CD4-positive, alpha-beta memory T cell (primary cell): ENCODE measurements at regions of chr9 and their contacts with region 1.

Region 1: GRCh38 chr9:69421908-69422801 is 97.1 kb downstream of the ENTREP1 start:
- DNase-seq: peak in 4 of 5 donors; percentile 41 to 46 (median 44)
- H3K4me3 ChIP-seq: no peak overlapping the region
- H3K4me3 Mint-ChIP-seq: no peak overlapping the region
- H3K27ac ChIP-seq: no peak overlapping the region
- H3K27ac Mint-ChIP-seq: no peak overlapping the region
- H3K4me1 ChIP-seq: no peaks in the 10 kb centered on the region
- H3K4me1 Mint-ChIP-seq: peaks cover 0 to 4% (median under 1%) of the 10 kb centered on the region in 4 donors
- H3K27me3 ChIP-seq: no peaks in the 10 kb centered on the region
- H3K27me3 Mint-ChIP-seq: peaks cover 4 to 18% of the 10 kb centered on the region in 2 donors

Region 2: DNA sequence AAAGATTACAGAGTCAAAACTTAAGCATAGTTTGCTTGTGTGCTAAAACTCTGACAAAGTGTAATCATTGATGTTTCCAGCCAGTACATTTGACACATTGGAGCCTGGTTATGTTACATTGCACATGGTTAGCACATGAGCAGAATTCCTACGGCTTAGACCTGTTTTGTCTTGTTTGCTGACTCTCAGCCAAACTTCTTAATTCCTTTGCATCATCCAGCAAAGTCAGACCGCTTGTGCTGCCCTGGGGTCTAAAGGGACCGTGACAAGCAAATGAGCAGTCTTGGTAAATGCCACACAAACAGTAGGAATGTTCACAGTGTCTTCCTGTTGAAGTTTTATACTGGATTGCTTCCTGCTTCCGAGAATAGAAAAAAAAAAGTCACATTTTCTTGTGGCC is 169.1 kb before region 1 on chr9:
- CTCF ChIA-PET with region 1: no interaction called
- POLR2A ChIA-PET with region 1: no interaction called
- intact Hi-C with region 1: no loop called
- DNase-seq: no peak
- H3K4me3 ChIP-seq: no peak overlapping the region
- H3K4me3 Mint-ChIP-seq: no peak overlapping the region
- H3K27ac ChIP-seq: no peak overlapping the region
- H3K27ac Mint-ChIP-seq: no peak overlapping the region
- H3K4me1 ChIP-seq: no peaks in the 10 kb centered on the region
- H3K4me1 Mint-ChIP-seq: no peaks in the 10 kb centered on the region
- H3K27me3 ChIP-seq: no peaks in the 10 kb centered on the region
- H3K27me3 Mint-ChIP-seq: no peaks in the 10 kb centered on the region

Region 3: DNA sequence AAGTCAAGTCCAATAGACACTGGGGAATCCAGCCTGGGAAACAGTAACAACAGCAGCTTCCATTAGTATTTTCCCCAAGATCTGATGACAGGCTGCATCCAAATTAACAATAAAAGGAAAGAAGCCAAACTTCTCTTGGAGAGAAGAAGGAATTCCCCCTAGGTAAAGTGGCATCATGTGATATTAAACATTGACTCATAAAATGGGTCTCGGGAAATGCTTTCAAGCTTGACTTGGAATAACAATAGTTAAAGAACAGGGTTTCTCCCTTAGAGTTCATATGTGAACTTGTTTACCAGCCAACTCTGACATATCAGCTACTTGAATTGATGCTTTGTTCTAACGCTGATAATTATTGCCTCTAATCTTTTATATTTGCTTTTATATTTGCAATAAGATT is 51.7 kb before region 1 on chr9:
- CTCF ChIA-PET with region 1: no interaction called
- POLR2A ChIA-PET with region 1: no interaction called
- intact Hi-C with region 1: no loop called
- DNase-seq: no peak
- H3K4me3 ChIP-seq: no peak overlapping the region
- H3K4me3 Mint-ChIP-seq: no peak overlapping the region
- H3K27ac ChIP-seq: no peak overlapping the region
- H3K27ac Mint-ChIP-seq: no peak overlapping the region
- H3K4me1 ChIP-seq: no peaks in the 10 kb centered on the region
- H3K4me1 Mint-ChIP-seq: no peaks in the 10 kb centered on the region
- H3K27me3 ChIP-seq: no peaks in the 10 kb centered on the region
- H3K27me3 Mint-ChIP-seq: peaks cover 9 to 10% of the 10 kb centered on the region in 2 donors

Region 4: GRCh38 chr9:69444021-69444420 is 21.9 kb after region 1 on chr9:
- CTCF ChIA-PET with region 1: interaction called, 10 read pairs
- POLR2A ChIA-PET with region 1: no interaction called
- intact Hi-C with region 1: no loop called
- DNase-seq: no peak
- H3K4me3 ChIP-seq: no peak overlapping the region
- H3K4me3 Mint-ChIP-seq: no peak overlapping the region
- H3K27ac ChIP-seq: no peak overlapping the region
- H3K27ac Mint-ChIP-seq: no peak overlapping the region
- H3K4me1 ChIP-seq: no peaks in the 10 kb centered on the region
- H3K4me1 Mint-ChIP-seq: peaks cover 0 to 18% (median 2%) of the 10 kb centered on the region in 4 donors
- H3K27me3 ChIP-seq: no peaks in the 10 kb centered on the region
- H3K27me3 Mint-ChIP-seq: peaks cover 1 to 10% of the 10 kb centered on the region in 2 donors

Region 5: DNA sequence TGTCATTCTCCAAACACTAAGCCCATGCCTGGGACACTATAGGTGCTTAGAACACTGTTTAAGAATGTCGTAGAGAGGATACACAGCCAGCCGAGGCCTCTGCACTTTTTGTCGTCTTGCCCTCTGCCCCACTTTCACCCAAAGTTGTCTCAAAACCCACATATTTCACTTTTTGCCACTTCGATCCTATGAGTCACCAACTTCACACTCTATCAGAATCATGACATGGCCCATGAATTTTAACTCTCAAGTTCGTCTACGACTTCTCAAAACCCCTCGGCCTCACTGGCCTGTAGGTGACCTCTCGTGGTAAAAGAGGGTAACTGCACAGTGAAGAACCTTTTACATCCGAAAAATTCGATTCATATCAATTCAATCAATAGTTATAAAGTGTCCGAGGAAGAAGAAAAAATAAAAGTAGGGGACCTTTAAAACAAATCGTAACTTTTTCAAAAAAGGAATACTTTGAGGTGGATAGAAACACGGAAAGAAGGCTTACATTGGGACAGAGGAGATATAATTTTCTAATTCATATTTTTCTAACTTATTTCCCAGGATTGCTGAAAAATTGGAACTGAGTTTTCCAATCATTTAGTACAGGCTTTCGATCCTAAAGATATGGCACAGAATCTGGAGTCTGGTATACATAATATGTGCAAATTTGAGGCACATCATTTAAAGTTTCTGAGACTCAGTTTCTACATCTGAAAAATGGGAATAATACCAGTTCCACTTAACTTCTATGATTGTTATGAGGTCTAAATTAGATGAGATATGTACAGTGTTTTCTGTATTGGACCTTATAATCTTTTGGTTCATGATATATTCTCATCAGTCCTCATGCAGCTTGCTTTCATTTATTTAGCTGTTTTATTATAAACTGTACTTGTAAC is 127.4 kb after region 1 on chr9:
- CTCF ChIA-PET with region 1: interaction called, 18 read pairs
- POLR2A ChIA-PET with region 1: no interaction called
- intact Hi-C with region 1: loop called (anchors 2 kb)
- DNase-seq: peak in 4 of 5 donors; percentile 36 to 45 (median 38)
- H3K4me3 ChIP-seq: no peak overlapping the region
- H3K4me3 Mint-ChIP-seq: peak overlapping the region in 6 of 8 donors; percentile 5 to 49 (median 33)
- H3K27ac ChIP-seq: no peak overlapping the region
- H3K27ac Mint-ChIP-seq: peak overlapping the region in 1 of 7 donors; percentile 26
- H3K4me1 ChIP-seq: no peaks in the 10 kb centered on the region
- H3K4me1 Mint-ChIP-seq: peaks cover 0 to 6% (median 4%) of the 10 kb centered on the region in 4 donors
- H3K27me3 ChIP-seq: no peaks in the 10 kb centered on the region
- H3K27me3 Mint-ChIP-seq: peaks cover 4 to 6% of the 10 kb centered on the region in 2 donors

Region 6: GRCh38 chr9:69877854-69878514 is 455.8 kb after region 1 on chr9:
- CTCF ChIA-PET with region 1: interaction called, 18 read pairs
- POLR2A ChIA-PET with region 1: no interaction called
- intact Hi-C with region 1: loop called (anchors 2 kb)
- DNase-seq: peak in 3 of 5 donors; percentile 0 to 16 (median 4)
- H3K4me3 ChIP-seq: no peak overlapping the region
- H3K4me3 Mint-ChIP-seq: no peak overlapping the region
- H3K27ac ChIP-seq: no peak overlapping the region
- H3K27ac Mint-ChIP-seq: peak overlapping the region in 1 of 7 donors; percentile 1
- H3K4me1 ChIP-seq: no peaks in the 10 kb centered on the region
- H3K4me1 Mint-ChIP-seq: no peaks in the 10 kb centered on the region
- H3K27me3 ChIP-seq: no peaks in the 10 kb centered on the region
- H3K27me3 Mint-ChIP-seq: peaks cover 2% of the 10 kb centered on the region in 2 donors

Region 7: GRCh38 chr9:69919461-69920061 is 497.4 kb after region 1 on chr9:
- CTCF ChIA-PET with region 1: interaction called, 38 read pairs
- POLR2A ChIA-PET with region 1: no interaction called
- intact Hi-C with region 1: no loop called
- DNase-seq: peak in 4 of 5 donors; percentile 21 to 43 (median 28)
- H3K4me3 ChIP-seq: no peak overlapping the region
- H3K4me3 Mint-ChIP-seq: no peak overlapping the region
- H3K27ac ChIP-seq: no peak overlapping the region
- H3K27ac Mint-ChIP-seq: no peak overlapping the region
- H3K4me1 ChIP-seq: no peaks in the 10 kb centered on the region
- H3K4me1 Mint-ChIP-seq: no peaks in the 10 kb centered on the region
- H3K27me3 ChIP-seq: no peaks in the 10 kb centered on the region
- H3K27me3 Mint-ChIP-seq: peaks cover 2 to 10% of the 10 kb centered on the region in 2 donors

Region 8: GRCh38 chr9:70111042-70111602 is 689.0 kb after region 1 on chr9:
- CTCF ChIA-PET with region 1: interaction called, 49 read pairs
- POLR2A ChIA-PET with region 1: no interaction called
- intact Hi-C with region 1: no loop called
- DNase-seq: peak in 4 of 5 donors; percentile 21 to 26 (median 24)
- H3K4me3 ChIP-seq: no peak overlapping the region
- H3K4me3 Mint-ChIP-seq: no peak overlapping the region
- H3K27ac ChIP-seq: no peak overlapping the region
- H3K27ac Mint-ChIP-seq: no peak overlapping the region
- H3K4me1 ChIP-seq: no peaks in the 10 kb centered on the region
- H3K4me1 Mint-ChIP-seq: peaks cover 6 to 11% (median 9%) of the 10 kb centered on the region in 4 donors
- H3K27me3 ChIP-seq: no peaks in the 10 kb centered on the region
- H3K27me3 Mint-ChIP-seq: peaks cover 10 to 17% of the 10 kb centered on the region in 2 donors